Activated CD4-positive, alpha-beta T cell treated with anti-CD3 and anti-CD28 coated beads for 36 hours (primary cell): ENCODE measurements at regions of chr2 and their contacts with region 1.

Region 1: DNA sequence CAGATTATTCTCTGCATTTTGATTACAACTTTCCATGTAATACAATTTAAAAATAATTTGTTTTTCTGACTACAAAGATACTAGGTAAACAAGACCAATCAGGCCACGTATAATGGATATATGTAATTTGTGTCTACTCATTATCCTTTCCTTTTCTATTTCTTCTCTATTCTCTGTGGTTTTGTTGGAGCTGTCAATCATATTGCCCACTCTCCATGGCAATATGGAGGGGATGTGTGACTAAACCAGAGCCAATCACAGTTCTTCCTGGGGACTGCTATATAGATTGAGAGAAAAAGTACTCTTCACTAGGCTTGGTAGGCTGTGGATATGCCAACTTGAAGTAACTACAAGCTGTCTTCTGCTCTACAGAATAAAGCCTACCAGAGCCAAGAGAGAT is 144.7 kb downstream of the DNAH7 start:
- DNase-seq: no peak
- ATAC-seq: no peak
- H3K4me3 Mint-ChIP-seq: no peak overlapping the region
- H3K27ac Mint-ChIP-seq: no peak overlapping the region
- H3K4me1 Mint-ChIP-seq: peaks cover 6% of the 10 kb centered on the region
- H3K27me3 Mint-ChIP-seq: peaks cover 2% of the 10 kb centered on the region

Region 2: GRCh38 chr2:195808189-195808588 is 115.7 kb before region 1 on chr2:
- CTCF ChIA-PET with region 1: no interaction called
- POLR2A ChIA-PET with region 1: no interaction called
- intact Hi-C with region 1: no loop called
- DNase-seq: no peak
- ATAC-seq: no peak
- H3K4me3 Mint-ChIP-seq: no peak overlapping the region
- H3K27ac Mint-ChIP-seq: no peak overlapping the region
- H3K4me1 Mint-ChIP-seq: no peaks in the 10 kb centered on the region
- H3K27me3 Mint-ChIP-seq: no peaks in the 10 kb centered on the region

Region 3: DNA sequence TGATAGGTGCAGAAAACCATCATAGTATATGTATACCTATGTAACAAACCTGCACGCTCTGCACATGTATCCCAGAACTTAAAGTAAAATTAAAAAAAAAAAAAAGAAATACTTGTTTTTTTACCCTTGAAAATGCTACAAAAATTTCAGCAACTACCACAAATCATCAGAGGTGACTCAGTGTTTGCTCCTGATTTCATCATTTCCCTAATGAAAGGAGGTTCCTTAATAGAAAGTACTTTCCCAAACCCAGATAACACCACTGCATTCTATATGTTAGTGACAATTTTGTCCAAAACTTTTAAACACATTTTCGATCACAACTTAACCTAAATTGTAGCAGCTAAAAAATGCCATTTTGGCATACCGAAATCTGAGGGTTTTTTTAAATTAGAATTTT is 103.5 kb before region 1 on chr2:
- CTCF ChIA-PET with region 1: no interaction called
- POLR2A ChIA-PET with region 1: no interaction called
- intact Hi-C with region 1: no loop called
- DNase-seq: no peak
- ATAC-seq: no peak
- H3K4me3 Mint-ChIP-seq: no peak overlapping the region
- H3K27ac Mint-ChIP-seq: no peak overlapping the region
- H3K4me1 Mint-ChIP-seq: no peaks in the 10 kb centered on the region
- H3K27me3 Mint-ChIP-seq: no peaks in the 10 kb centered on the region

Region 4: GRCh38 chr2:196291873-196292800 is 368.2 kb after region 1 on chr2:
- CTCF ChIA-PET with region 1: no interaction called
- POLR2A ChIA-PET with region 1: no interaction called
- intact Hi-C with region 1: loop called in 1 of 2 experiments (anchors 5 kb)
- DNase-seq: no peak
- ATAC-seq: peak; percentile 16
- H3K4me3 Mint-ChIP-seq: no peak overlapping the region
- H3K27ac Mint-ChIP-seq: peak overlapping the region; percentile 57
- H3K4me1 Mint-ChIP-seq: peaks cover 55% of the 10 kb centered on the region
- H3K27me3 Mint-ChIP-seq: no peaks in the 10 kb centered on the region